Ascending aorta (tissue), 2 donors: ENCODE measurements at regions of chr17 and their contacts with region 1.

Region 1: DNA sequence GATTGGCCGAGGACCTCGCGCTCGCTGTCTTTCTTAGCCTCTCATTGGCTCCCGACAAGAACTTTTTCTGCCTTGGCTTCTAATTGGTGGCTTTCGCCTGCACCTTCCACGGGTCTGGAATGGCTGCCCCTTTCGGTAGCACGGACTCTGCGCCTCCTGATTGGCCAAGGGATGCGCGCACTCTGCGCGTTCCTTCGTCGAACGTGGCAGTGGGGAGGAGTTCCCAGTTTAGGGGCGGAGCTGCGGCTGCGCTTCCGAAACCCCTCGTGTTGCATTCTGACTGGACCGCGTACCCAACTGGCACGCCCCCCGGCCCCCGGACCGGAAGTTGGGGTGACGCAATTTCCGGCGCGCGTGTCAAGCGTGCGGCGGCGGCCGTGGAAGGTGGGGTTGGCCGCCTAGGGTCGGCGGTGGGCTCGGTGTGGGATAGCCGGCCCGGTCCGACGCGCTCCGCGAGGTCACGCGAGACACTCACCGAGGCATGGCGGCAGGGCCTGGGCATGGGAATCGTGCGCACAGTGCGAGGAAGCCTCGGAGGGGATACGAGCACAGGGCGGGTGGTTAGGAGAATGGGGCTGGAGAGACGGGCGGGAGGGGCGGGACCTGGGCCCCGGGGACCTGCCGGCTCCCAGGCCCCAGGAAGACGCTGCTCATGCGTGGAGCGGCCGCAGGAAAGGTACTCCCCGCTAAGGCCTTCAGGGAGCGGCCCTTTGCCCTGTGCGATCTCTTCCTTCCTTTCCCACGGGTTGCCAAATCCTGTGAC is 602 bp upstream of the P4HB start:
- DNase-seq: peak; percentile 99 to 100
- H3K4me3 ChIP-seq: peak overlapping the region; percentile 83 to 90
- H3K27ac ChIP-seq: peak overlapping the region; percentile 96
- H3K4me1 ChIP-seq: peaks cover 10 to 29% of the 10 kb centered on the region in 2 donors
- H3K27me3 ChIP-seq: no peaks in the 10 kb centered on the region
- CTCF ChIP-seq: no peak

Region 2: DNA sequence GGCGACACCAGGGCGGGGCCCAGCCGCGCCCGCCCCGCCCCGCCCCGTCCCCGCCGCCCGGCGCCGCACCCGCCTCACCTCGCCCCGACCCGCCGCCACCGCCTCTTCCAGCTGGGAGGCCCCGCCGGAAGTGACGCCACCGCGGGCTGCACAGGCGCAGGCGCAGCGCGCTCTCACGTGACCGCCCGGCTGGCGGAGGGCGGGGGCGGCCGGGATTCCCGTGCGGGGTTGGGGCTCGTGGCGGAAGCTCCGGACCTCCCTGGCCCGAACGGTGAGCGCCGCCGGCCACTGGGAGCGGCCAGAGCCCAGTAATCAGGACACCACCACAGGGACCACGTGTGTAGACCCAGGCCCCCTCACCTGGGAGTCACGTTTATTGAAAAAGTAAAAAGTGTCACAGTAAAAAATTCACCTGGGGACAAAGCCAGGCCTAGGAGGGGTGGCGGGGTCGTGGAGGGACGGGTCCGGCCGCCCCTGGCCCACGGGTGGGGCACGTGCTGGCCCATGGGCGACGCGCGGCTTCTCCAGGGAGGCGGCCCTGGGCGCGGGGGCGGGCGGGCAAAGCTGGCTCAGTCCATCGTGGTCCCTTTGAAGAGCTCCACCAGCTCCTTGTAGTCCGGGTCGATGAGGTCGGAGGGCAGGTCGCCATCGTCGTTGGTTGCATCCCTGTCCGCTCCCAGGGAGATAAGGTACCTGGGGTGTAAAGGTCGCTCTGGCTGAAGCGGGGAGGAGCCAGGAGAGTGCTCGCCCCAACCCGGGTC is 27.6 kb before region 1 on chr17 and contains the start of gene MCRIP1:
- intact Hi-C with region 1: loop called (anchors 1 kb)
- DNase-seq: peak; percentile 77 to 97
- H3K4me3 ChIP-seq: peak within 1 kb of the TSS; percentile 92 to 94
- H3K27ac ChIP-seq: peak within 1 kb of the TSS; percentile 91 to 94
- H3K4me1 ChIP-seq: peaks cover 16 to 22% of the 10 kb centered on the region in 2 donors
- H3K27me3 ChIP-seq: no peaks in the 10 kb centered on the region
- CTCF ChIP-seq: no peak
- total RNA-seq, gene MCRIP1: 149 TPM